T-cell (primary cell): ENCODE measurements at regions of chr2 and their contacts with region 1.

Region 1: DNA sequence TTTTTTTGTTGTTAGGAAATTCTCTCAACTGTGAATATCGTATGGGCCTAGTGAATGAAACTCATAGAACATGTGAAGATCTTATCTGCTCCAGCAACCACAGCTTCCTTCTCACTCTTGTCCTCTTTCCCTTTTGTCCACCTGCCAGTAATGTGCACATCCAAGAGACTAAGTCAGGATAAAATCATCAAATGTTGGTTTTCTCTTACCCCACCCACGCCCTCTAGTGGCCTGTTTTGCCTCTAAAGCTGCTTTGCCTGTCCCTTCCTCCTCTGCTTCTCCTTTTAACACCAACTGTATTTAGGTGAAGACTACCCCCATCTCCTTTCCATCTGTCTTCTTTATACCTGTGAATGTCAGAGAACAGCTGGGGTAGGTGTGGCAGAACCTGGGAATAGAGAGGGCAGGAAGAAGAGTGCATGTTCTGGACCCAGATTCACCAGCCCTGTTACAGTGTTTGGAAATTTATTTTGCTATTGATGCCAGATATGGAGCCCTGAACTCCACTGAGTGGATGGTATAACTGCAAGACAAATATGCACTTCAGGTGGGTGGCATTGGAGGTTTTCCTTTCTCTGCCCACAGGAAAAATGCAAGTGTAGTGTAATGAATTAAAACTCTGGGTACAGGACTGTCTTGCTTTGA is 8.4 kb upstream of the MGAT5 start:
- DNase-seq: peak; percentile 45 to 84 (median 71)
- ATAC-seq: peak; percentile 33 to 61 (median 41)
- H3K4me3 ChIP-seq: no peak overlapping the region
- H3K4me3 Mint-ChIP-seq: peak overlapping the region in 2 of 3 donors; percentile 26 to 37
- H3K27ac ChIP-seq: peak overlapping the region; percentile 13
- H3K27ac Mint-ChIP-seq: peak overlapping the region; percentile 50 to 82
- H3K4me1 ChIP-seq: peaks cover 50 to 64% of the 10 kb centered on the region in 2 experiments
- H3K4me1 Mint-ChIP-seq: peaks cover 87 to 95% (median 94%) of the 10 kb centered on the region in 3 donors
- H3K27me3 ChIP-seq: no peaks in the 10 kb centered on the region
- H3K27me3 Mint-ChIP-seq: no peaks in the 10 kb centered on the region

Region 2: GRCh38 chr2:134233728-134234136 is 11.7 kb before region 1 on chr2:
- CTCF ChIA-PET with region 1: interaction called, 3 to 16 read pairs
- POLR2A ChIA-PET with region 1: no interaction called
- DNase-seq: no peak
- ATAC-seq: peak in 1 of 4 experiments; percentile 7
- H3K4me3 ChIP-seq: peak overlapping the region in 1 of 2 donors; percentile 6
- H3K4me3 Mint-ChIP-seq: peak overlapping the region; percentile 32 to 48 (median 37)
- H3K27ac ChIP-seq: peak overlapping the region; percentile 81
- H3K27ac Mint-ChIP-seq: peak overlapping the region; percentile 89 to 93
- H3K4me1 ChIP-seq: peaks cover 50 to 62% of the 10 kb centered on the region in 2 experiments
- H3K4me1 Mint-ChIP-seq: peaks cover 76 to 90% (median 84%) of the 10 kb centered on the region in 3 donors
- H3K27me3 ChIP-seq: no peaks in the 10 kb centered on the region
- H3K27me3 Mint-ChIP-seq: no peaks in the 10 kb centered on the region

Region 3: DNA sequence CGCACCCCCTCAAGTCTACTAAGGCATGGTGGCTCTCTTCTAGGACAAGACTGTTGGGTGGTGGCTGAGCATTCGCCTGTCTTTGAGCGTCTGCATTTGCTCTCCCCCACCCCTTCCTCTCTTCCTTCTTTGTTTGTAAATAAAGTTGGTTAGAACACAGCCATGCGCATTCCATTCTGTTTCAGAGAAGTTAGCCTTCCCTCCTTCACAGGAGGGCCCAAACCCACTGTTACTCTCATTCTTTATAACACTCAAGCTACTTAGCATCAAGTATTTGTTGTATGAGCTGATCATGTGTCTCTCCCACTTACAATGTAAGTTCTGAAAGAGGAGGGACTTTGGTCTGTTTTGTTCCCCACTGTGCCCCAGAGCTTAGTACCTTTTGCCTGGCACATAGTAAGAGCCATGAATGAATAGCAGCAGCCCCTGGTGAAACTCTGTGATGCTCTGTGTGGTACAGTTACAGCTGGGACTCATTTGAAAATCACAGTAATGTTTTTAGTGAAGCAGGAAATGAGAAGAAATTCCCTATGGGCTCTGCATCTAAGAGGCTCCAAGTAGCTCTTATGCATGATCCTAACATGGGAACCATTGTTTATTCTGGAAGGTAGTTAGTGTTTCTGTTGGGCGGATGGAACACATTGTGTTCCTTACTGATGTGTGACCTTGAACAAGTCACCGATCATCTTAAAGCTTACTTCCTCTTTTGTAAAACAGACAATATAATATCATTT is 16.1 kb after region 1 on chr2:
- CTCF ChIA-PET with region 1: interaction called, 5 to 10 read pairs
- POLR2A ChIA-PET with region 1: no interaction called
- DNase-seq: no peak
- ATAC-seq: no peak
- H3K4me3 ChIP-seq: no peak overlapping the region
- H3K4me3 Mint-ChIP-seq: peak overlapping the region in 2 of 3 donors; percentile 25 to 56
- H3K27ac ChIP-seq: no peak overlapping the region
- H3K27ac Mint-ChIP-seq: peak overlapping the region; percentile 80 to 81
- H3K4me1 ChIP-seq: peaks cover 60 to 66% of the 10 kb centered on the region in 2 experiments
- H3K4me1 Mint-ChIP-seq: peaks cover 69 to 80% (median 80%) of the 10 kb centered on the region in 3 donors
- H3K27me3 ChIP-seq: no peaks in the 10 kb centered on the region
- H3K27me3 Mint-ChIP-seq: no peaks in the 10 kb centered on the region